ENCODE measurements at regions of chr7 and their contacts with region 1.

Region 1: DNA sequence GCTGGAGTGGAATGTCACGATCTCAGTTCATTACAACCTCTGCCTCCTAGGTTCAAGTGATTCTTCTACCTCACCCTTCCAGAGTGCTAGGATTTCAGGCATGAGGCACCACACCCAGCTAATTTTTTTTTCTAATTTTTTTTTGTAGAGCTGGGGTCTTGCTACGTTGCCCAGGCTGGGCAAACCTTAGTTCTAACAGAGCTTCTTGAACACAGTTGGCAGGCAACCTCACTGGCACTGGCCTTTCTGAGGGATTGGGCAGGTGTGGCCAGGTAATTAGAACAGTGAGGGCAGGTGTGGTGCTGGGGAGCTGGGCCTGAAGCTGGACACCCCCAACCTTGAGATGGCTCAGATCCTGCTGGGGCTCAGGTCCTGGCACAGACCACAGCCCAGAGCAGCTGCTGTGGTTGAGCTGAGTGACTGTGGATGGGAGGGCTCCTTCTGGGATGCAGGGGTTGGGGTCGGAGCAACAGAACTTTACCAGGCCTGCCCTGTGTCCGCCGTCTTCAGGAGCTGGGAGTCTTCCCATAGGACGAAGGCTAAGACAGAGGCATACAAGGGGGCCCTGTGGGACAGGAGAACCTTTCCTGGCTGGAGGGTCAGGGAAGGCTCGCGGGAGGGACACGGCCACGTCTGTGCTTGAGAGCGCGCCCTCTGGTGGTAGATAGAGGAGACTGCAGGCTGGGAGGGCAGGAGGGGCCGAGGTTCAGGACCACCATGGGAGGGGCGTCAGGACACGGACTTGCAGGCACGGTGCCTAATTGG is 48.2 kb downstream of the COL26A1 start:
- DNase-seq: peak; percentile 35 to 65
- ATAC-seq: peak; percentile 64 to 87 (median 70)
- H3K4me3 ChIP-seq: no peak overlapping the region
- H3K4me3 Mint-ChIP-seq: no peak overlapping the region
- H3K27ac ChIP-seq: no peak overlapping the region
- H3K27ac Mint-ChIP-seq: peak overlapping the region in 1 of 2 donors; percentile 14
- H3K4me1 ChIP-seq: peaks cover 11% of the 10 kb centered on the region
- H3K4me1 Mint-ChIP-seq: peaks cover 9 to 10% of the 10 kb centered on the region in 2 donors
- H3K27me3 ChIP-seq: no peaks in the 10 kb centered on the region
- H3K27me3 Mint-ChIP-seq: peaks cover 0 to 14% of the 10 kb centered on the region in 2 donors
- CTCF ChIP-seq: peak; percentile 82

Region 2: DNA sequence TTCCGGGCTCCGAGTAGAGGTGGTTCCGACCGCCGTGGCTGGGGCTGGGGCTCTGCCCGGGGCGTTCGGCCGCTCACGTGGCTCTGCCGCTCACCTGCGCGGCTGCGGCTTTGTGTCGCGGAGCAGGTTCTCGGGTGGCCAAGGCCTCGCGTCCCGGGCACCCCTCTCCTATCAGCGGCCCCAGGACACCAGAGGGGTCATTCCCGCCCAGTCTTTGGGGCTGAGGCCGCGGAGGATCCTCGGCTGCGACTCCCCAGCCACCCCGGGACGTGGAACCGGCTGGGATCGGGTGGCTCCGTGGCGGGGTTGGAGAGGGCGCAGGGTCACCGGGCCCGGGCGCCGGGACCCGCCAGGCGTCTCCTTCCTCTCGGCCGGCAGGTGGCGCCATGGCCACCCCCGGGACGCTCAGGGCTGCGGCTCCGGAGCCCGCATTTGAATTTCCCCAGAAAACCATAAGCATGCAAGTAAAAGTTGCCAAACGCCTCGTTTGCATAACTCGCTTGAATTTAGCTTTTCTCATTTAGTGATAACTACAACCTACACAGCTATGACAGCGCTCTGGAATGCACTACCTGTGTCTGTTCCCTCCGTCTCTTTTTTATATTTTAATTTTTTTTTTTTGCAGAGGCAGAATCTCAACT is 47.1 kb before region 1 on chr7:
- intact Hi-C with region 1: loop called (anchors 5 kb)
- DNase-seq: peak; percentile 59 to 84
- ATAC-seq: peak; percentile 87 to 92 (median 88)
- H3K4me3 ChIP-seq: peak overlapping the region; percentile 20
- H3K4me3 Mint-ChIP-seq: peak overlapping the region; percentile 50
- H3K27ac ChIP-seq: no peak overlapping the region
- H3K27ac Mint-ChIP-seq: no peak overlapping the region
- H3K4me1 ChIP-seq: peaks cover 9% of the 10 kb centered on the region
- H3K4me1 Mint-ChIP-seq: peaks cover 0 to 5% of the 10 kb centered on the region in 2 donors
- H3K27me3 ChIP-seq: peaks cover 9% of the 10 kb centered on the region
- H3K27me3 Mint-ChIP-seq: peaks cover 19 to 24% of the 10 kb centered on the region in 2 donors
- CTCF ChIP-seq: peak; percentile 91

Measured in natural killer cell (primary cell).